Endothelial cell of umbilical vein (primary cell): ENCODE measurements at regions of chr2 and their contacts with region 1.

Region 1: GRCh38 chr2:176518823-176519222 is 249.6 kb downstream of the MTX2 start:
- DNase-seq: peak; percentile 98
- H3K4me3 ChIP-seq: no peak overlapping the region
- H3K27ac ChIP-seq: peak overlapping the region; percentile 64
- H3K4me1 ChIP-seq: peaks cover 36% of the 10 kb centered on the region
- H3K27me3 ChIP-seq: no peaks in the 10 kb centered on the region
- CTCF ChIP-seq: peak in 1 of 2 donors; percentile 12
- POLR2A ChIP-seq: peak; percentile 31

Region 2: GRCh38 chr2:176178038-176178756 is 340.6 kb before region 1 on chr2:
- CTCF ChIA-PET with region 1: no interaction called
- POLR2A ChIA-PET with region 1: no interaction called
- dilution Hi-C with region 1: no loop called
- intact Hi-C with region 1: loop called (anchors 5 kb)
- DNase-seq: peak; percentile 68
- H3K4me3 ChIP-seq: peak overlapping the region; percentile 33 to 49 (median 48)
- H3K27ac ChIP-seq: peak overlapping the region; percentile 77
- H3K4me1 ChIP-seq: peaks cover 30% of the 10 kb centered on the region
- H3K27me3 ChIP-seq: no peaks in the 10 kb centered on the region
- CTCF ChIP-seq: no peak
- POLR2A ChIP-seq: no peak